ENCODE measurements at regions of chr19 and their contacts with region 1.

Region 1: DNA sequence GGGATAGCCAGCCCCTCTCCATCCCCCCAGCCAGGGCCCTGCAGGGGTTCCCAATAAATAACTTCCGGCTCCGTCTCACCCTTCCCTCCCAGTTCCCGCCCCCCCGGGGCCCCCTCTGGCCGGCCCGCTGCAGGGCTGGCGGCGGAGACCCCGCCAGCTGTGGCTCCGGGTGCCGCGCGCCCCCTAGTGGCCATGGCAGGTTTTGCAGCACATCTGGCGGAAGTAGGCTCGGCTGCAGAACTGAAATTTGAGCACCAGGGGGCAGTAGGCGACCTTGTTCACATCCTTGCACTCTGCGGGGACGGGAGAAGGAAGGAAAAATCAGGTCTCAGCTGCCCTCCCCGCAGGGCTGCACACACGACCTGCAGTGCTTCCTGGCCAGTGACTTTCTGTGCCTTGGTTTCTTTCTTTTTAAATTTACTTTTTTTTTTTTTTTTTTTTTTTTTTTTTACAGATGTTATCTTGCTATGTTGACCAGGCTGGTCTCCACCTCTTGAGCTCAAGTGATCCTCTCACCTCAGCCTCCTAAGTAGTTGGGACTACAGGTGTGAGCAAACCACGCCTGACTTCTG is 3.6 kb upstream of the MYO1F start:
- DNase-seq: peak; percentile 78 to 96 (median 88)
- ATAC-seq: peak; percentile 71
- H3K4me3 ChIP-seq: no peak overlapping the region
- H3K4me3 Mint-ChIP-seq: no peak overlapping the region
- H3K27ac ChIP-seq: no peak overlapping the region
- H3K27ac Mint-ChIP-seq: no peak overlapping the region
- H3K4me1 ChIP-seq: peaks cover 51% of the 10 kb centered on the region
- H3K4me1 Mint-ChIP-seq: peaks cover 33% of the 10 kb centered on the region
- H3K27me3 ChIP-seq: no peaks in the 10 kb centered on the region
- H3K27me3 Mint-ChIP-seq: no peaks in the 10 kb centered on the region
- CTCF ChIP-seq: peak; percentile 99

Region 2: GRCh38 chr19:7943444-7944176 is 637.2 kb before region 1 on chr19 and contains the start of gene TIMM44:
- CTCF ChIA-PET with region 1: no interaction called
- POLR2A ChIA-PET with region 1: no interaction called
- intact Hi-C with region 1: no loop called
- DNase-seq: peak; percentile 95 to 99 (median 98)
- ATAC-seq: peak; percentile 97
- H3K4me3 ChIP-seq: peak within 1 kb of the TSS; percentile 77 to 96
- H3K4me3 Mint-ChIP-seq: peak within 1 kb of the TSS; percentile 91
- H3K27ac ChIP-seq: peak within 1 kb of the TSS; percentile 96 to 97
- H3K27ac Mint-ChIP-seq: peak within 1 kb of the TSS; percentile 96
- H3K4me1 ChIP-seq: peaks cover 17% of the 10 kb centered on the region
- H3K4me1 Mint-ChIP-seq: peaks cover 35% of the 10 kb centered on the region
- H3K27me3 ChIP-seq: no peaks in the 10 kb centered on the region
- H3K27me3 Mint-ChIP-seq: no peaks in the 10 kb centered on the region
- CTCF ChIP-seq: no peak
- total RNA-seq, gene TIMM44: 97.7 to 101 TPM

Region 3: GRCh38 chr19:8355631-8356402 is 225.0 kb before region 1 on chr19:
- CTCF ChIA-PET with region 1: interaction called, 32 read pairs
- POLR2A ChIA-PET with region 1: no interaction called
- intact Hi-C with region 1: loop called (anchors 5 kb)
- DNase-seq: no peak
- ATAC-seq: no peak
- H3K4me3 ChIP-seq: no peak overlapping the region
- H3K4me3 Mint-ChIP-seq: no peak overlapping the region
- H3K27ac ChIP-seq: no peak overlapping the region
- H3K27ac Mint-ChIP-seq: no peak overlapping the region
- H3K4me1 ChIP-seq: peaks cover 7% of the 10 kb centered on the region
- H3K4me1 Mint-ChIP-seq: no peaks in the 10 kb centered on the region
- H3K27me3 ChIP-seq: peaks cover 0 to 21% of the 10 kb centered on the region in 2 experiments
- H3K27me3 Mint-ChIP-seq: peaks cover 13% of the 10 kb centered on the region
- CTCF ChIP-seq: no peak

Region 4: DNA sequence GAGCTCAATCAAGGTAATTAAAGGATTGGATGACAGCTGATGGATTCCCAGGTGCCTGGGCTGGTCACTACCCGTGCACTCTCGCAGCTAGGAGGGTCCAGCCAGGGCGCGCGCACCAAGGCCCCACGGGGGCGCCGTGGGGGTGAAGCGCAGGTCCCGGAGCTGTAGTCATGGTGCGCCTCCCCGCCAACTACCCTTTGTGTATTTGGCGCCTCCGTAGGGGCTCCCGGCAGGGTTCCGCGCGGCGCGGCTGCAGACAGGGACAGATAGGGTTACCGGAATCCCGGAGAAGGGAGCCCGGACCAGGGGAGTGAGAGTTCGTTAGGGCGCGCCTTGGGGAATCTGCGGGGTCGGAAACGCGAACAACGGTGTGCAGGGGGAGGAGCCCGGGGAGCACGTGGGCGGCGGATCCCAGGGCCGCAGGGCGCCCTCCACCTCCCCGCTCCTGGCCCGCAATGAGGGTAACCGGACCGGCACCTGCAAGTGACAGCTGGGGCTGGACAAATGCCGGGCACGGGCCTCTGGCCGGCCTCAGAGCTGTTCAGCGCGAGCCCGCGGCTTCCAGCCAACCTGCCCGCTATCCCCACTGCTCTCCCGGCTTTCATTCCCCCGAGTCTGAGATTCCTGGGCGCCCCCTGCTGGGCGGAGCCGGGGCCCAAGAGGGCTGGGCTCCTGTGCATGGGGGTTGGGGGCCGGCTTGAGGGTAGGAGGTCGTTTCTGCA is 75.0 kb before region 1 on chr19:
- CTCF ChIA-PET with region 1: interaction called, 362 read pairs
- POLR2A ChIA-PET with region 1: interaction called, 16 read pairs
- intact Hi-C with region 1: loop called in 1 of 2 experiments (anchors 5 kb)
- DNase-seq: peak in 8 of 9 experiments; percentile 54 to 85 (median 70)
- ATAC-seq: peak; percentile 78
- H3K4me3 ChIP-seq: peak overlapping the region; percentile 58 to 83
- H3K4me3 Mint-ChIP-seq: peak overlapping the region; percentile 91
- H3K27ac ChIP-seq: peak overlapping the region; percentile 32 to 43
- H3K27ac Mint-ChIP-seq: peak overlapping the region; percentile 87
- H3K4me1 ChIP-seq: peaks cover 19% of the 10 kb centered on the region
- H3K4me1 Mint-ChIP-seq: peaks cover 19% of the 10 kb centered on the region
- H3K27me3 ChIP-seq: no peaks in the 10 kb centered on the region
- H3K27me3 Mint-ChIP-seq: no peaks in the 10 kb centered on the region
- CTCF ChIP-seq: peak; percentile 45

Region 5: DNA sequence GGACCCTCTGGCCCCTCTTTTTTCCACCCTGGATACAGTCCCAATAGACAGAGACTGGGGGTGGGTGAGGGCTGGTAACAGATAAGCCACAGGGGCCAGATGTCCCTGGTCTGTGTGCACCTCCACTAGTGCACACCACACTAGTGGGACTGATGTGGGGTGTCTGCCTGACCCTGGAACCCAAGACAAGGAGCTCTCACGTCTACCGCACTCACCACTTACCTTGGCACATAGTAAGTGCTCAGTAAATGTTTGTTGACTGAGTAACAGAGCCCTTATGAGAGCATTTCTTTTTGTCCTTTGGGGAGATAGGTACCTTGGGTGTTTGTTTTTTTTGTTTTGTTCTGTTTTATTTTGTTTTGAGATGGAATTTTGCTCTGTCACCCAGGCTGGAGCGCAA is 43.7 kb before region 1 on chr19:
- CTCF ChIA-PET with region 1: interaction called, 17 read pairs
- POLR2A ChIA-PET with region 1: interaction called, 4 read pairs
- intact Hi-C with region 1: no loop called
- DNase-seq: no peak
- ATAC-seq: no peak
- H3K4me3 ChIP-seq: no peak overlapping the region
- H3K4me3 Mint-ChIP-seq: no peak overlapping the region
- H3K27ac ChIP-seq: peak overlapping the region in 1 of 2 experiments; percentile 1
- H3K27ac Mint-ChIP-seq: no peak overlapping the region
- H3K4me1 ChIP-seq: no peaks in the 10 kb centered on the region
- H3K4me1 Mint-ChIP-seq: no peaks in the 10 kb centered on the region
- H3K27me3 ChIP-seq: no peaks in the 10 kb centered on the region
- H3K27me3 Mint-ChIP-seq: no peaks in the 10 kb centered on the region
- CTCF ChIP-seq: no peak

Region 6: GRCh38 chr19:8592231-8593009 is 11.6 kb after region 1 on chr19:
- CTCF ChIA-PET with region 1: interaction called, 41 read pairs
- POLR2A ChIA-PET with region 1: interaction called, 5 read pairs
- intact Hi-C with region 1: loop called in 1 of 2 experiments (anchors 1 kb)
- DNase-seq: peak; percentile 91 to 98 (median 95)
- ATAC-seq: peak; percentile 86
- H3K4me3 ChIP-seq: peak overlapping the region; percentile 47 to 50
- H3K4me3 Mint-ChIP-seq: peak overlapping the region; percentile 84
- H3K27ac ChIP-seq: peak overlapping the region in 1 of 2 experiments; percentile 32
- H3K27ac Mint-ChIP-seq: peak overlapping the region; percentile 84
- H3K4me1 ChIP-seq: peaks cover 21% of the 10 kb centered on the region
- H3K4me1 Mint-ChIP-seq: peaks cover 36% of the 10 kb centered on the region
- H3K27me3 ChIP-seq: no peaks in the 10 kb centered on the region
- H3K27me3 Mint-ChIP-seq: no peaks in the 10 kb centered on the region
- CTCF ChIP-seq: no peak

Region 7: GRCh38 chr19:8641908-8642547 is 61.2 kb after region 1 on chr19:
- CTCF ChIA-PET with region 1: interaction called, 87 read pairs
- POLR2A ChIA-PET with region 1: interaction called, 3 read pairs
- intact Hi-C with region 1: loop called (anchors 1 kb)
- DNase-seq: peak in 3 of 9 experiments; percentile 23 to 76 (median 67)
- ATAC-seq: peak; percentile 74
- H3K4me3 ChIP-seq: no peak overlapping the region
- H3K4me3 Mint-ChIP-seq: no peak overlapping the region
- H3K27ac ChIP-seq: no peak overlapping the region
- H3K27ac Mint-ChIP-seq: no peak overlapping the region
- H3K4me1 ChIP-seq: peaks cover 7% of the 10 kb centered on the region
- H3K4me1 Mint-ChIP-seq: peaks cover 11% of the 10 kb centered on the region
- H3K27me3 ChIP-seq: peaks cover 0 to 4% of the 10 kb centered on the region in 2 experiments
- H3K27me3 Mint-ChIP-seq: peaks cover 26% of the 10 kb centered on the region
- CTCF ChIP-seq: peak; percentile 63

Measured in CD8-positive, alpha-beta T cell (primary cell).